ENCODE measurements at regions of chr22 and their contacts with region 1.

Region 1: DNA sequence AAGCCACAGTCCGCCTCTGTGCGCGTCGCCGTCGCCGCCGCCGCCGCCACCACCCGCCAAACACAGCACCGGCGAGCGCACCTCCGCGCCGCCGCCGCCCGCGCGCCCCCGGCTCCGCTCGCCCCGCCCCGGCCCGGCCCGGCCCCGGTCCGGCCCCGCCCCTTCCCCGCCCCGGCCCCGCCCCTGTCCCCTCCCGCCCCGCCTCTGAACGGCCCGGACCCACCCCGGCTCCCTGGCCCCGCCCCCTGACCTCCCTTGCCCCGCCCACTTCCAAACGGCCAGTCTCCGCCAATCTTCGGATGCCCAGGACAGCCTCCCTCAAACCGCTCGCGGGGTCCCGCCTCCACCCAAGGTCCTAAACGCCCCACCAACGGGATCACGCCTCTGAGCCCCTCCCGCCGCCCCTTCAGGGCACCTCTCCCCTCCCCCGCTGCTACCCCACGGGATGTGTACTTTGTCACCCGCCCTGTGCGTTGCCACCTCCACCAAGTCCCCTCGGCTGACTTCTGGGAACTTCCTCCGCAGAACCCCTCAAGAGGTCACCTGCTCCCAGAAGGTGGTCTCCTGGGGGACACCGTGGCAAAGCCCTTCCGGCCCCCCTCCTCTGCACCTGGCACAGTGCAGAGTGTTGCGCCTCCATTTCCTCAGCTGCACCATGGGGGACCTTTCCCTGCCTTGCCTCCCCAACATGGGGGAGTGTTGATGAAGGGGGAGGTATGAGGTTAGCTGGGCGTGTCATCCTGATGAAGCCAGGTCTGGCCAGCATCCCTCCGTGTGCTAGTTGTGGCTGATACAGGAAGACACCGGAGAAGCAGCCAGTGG is at the start of gene KIAA0930:
- DNase-seq: peak; percentile 90
- H3K4me3 Mint-ChIP-seq: peak within 1 kb of the TSS; percentile 84
- H3K27ac Mint-ChIP-seq: peak within 1 kb of the TSS; percentile 66
- H3K4me1 Mint-ChIP-seq: peaks cover 26% of the 10 kb centered on the region
- H3K27me3 Mint-ChIP-seq: no peaks in the 10 kb centered on the region
- total RNA-seq, gene KIAA0930: 31.1 to 31.9 TPM

Region 2: DNA sequence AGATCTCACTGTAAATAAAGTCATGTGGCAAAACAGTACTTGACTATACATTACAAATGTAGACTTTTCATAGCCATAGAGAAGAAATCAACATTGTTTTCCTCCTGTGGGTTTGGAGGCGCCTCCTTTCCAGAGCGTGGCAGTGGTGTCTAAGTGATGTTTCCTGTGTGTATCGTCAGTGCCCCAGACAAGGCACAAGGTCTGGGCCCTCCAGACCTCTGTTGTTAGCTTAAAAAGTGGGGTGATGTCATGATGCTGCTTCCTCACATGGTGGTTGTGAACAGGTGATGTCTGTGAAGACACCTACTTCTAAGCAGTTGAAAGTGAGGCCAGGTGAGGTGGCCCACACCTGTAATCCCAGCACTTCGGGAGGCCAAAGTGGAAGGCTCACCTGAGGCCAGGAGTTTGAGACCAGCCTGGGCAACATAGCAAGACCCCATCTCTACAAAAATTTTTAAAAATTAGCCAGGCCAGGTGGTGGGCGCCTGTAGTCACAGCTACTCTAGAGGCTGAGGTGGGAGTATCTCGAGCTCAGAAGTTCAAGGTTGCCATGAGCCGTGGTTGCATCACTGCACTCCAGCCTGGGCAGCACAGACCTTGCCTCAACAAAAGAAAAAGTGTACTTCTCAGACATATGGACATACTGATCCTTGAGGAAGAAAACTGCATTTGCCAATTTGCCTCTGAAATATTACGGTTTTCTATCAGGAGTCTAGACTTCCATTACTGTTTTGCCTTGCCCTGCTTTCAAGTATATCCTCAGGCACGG is 61.6 kb before region 1 on chr22:
- CTCF ChIA-PET with region 1: no interaction called
- POLR2A ChIA-PET with region 1: no interaction called
- intact Hi-C with region 1: loop called (anchors 5 kb)
- DNase-seq: peak; percentile 43
- H3K4me3 Mint-ChIP-seq: no peak overlapping the region
- H3K27ac Mint-ChIP-seq: peak overlapping the region; percentile 59
- H3K4me1 Mint-ChIP-seq: peaks cover 69% of the 10 kb centered on the region
- H3K27me3 Mint-ChIP-seq: no peaks in the 10 kb centered on the region

Region 3: DNA sequence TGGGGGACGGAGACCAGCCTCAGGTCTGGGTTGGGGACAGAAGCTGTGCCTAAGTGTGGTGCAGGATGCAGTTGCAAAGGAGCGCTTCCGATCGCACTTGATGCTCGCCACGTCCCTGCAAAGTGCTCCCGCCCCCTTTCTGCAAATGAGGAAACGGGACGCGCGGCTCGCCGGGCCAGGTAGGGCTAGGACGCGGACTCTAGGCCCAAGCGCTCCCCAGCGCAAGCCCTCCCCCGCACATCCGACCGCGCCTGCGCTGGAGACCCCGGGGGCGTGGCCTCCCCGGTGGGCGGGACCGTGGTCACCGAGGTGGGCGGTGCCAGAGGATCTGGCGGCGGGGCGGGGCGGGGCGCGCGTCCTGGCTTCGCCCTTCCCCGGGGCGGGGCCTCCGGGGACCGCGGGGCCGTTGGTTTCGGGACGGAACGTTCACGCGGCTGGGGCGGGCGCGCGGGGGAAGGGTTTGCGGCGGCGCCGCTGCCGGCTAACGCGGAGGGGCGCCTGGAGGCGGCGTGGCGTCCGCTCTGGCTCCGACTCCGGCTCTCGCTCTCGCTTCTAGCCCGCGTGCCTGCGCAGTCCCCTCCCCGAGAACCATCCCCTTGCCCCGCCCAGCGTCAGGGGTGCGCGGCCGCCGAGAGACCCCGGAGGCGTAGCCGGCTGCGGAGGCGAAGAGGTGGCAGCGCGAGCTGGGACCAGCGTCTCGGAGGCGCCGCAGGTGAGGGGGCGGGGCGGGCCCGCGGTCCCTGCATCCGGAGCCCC is 68.6 kb after region 1 on chr22 and contains the start of gene FAM118A:
- CTCF ChIA-PET with region 1: no interaction called
- POLR2A ChIA-PET with region 1: no interaction called
- intact Hi-C with region 1: loop called (anchors 2 kb)
- DNase-seq: peak; percentile 97
- H3K4me3 Mint-ChIP-seq: peak within 1 kb of the TSS; percentile 83
- H3K27ac Mint-ChIP-seq: peak within 1 kb of the TSS; percentile 92
- H3K4me1 Mint-ChIP-seq: peaks cover 44% of the 10 kb centered on the region
- H3K27me3 Mint-ChIP-seq: no peaks in the 10 kb centered on the region
- total RNA-seq, gene FAM118A: 55.0 to 56.5 TPM